CD8-positive, alpha-beta memory T cell (primary cell): ENCODE measurements at regions of chr12 and their contacts with region 1.

Region 1: GRCh38 chr12:122123051-122123760 is 44.6 kb downstream of the MLXIP start:
- DNase-seq: peak; percentile 56 to 77 (median 62)
- H3K4me3 ChIP-seq: no peak overlapping the region
- H3K4me3 Mint-ChIP-seq: peak overlapping the region in 4 of 7 donors; percentile 11 to 67 (median 34)
- H3K27ac ChIP-seq: no peak overlapping the region
- H3K27ac Mint-ChIP-seq: peak overlapping the region in 5 of 8 donors; percentile 4 to 91 (median 36)
- H3K4me1 ChIP-seq: peaks cover 11% of the 10 kb centered on the region
- H3K4me1 Mint-ChIP-seq: peaks cover 22 to 44% (median 23%) of the 10 kb centered on the region in 3 donors
- H3K27me3 ChIP-seq: no peaks in the 10 kb centered on the region
- H3K27me3 Mint-ChIP-seq: no peaks in the 10 kb centered on the region

Region 2: DNA sequence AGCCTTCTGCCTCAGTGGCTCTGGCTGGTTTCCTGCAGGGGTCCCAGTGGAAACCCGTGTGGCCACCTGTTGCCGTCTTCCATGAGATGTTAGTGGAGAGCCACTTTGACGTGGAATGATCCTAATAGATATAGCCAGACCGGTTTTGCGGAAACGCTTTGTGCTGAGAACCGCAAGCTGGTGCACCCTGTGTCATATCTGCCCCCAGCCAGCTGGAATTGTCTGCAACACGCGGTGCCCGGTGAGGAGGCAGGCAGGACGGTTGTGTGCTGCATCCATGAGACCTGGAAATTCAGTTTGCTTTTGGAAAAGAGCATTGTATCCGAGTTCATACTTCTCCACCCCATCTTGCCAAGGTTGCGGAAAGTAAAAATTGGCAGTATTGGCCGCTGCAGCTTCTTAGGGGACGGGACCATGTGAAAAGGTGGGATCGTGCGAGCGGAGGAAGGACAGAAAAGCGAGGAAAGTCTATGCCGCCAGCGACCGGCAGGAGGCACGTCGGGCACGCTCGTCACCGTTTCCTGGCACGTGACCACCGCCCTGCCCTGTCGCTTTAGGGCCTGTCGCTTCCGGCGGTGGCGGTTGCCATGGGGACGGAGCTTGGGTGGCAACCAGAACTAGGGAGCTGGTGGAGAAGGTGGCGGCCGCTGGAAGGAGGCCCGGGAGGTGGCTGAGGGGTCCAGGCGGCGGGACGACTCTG is 205.1 kb before region 1 on chr12 and contains the start of gene CFAP251:
- CTCF ChIA-PET with region 1: interaction called, 10 read pairs
- POLR2A ChIA-PET with region 1: no interaction called
- DNase-seq: peak; percentile 94 to 99 (median 98)
- H3K4me3 ChIP-seq: peak within 1 kb of the TSS; percentile 54
- H3K4me3 Mint-ChIP-seq: peak within 1 kb of the TSS; percentile 72 to 88 (median 85)
- H3K27ac ChIP-seq: peak within 1 kb of the TSS; percentile 64
- H3K27ac Mint-ChIP-seq: peak within 1 kb of the TSS; percentile 91 to 99 (median 96)
- H3K4me1 ChIP-seq: peaks cover 9% of the 10 kb centered on the region
- H3K4me1 Mint-ChIP-seq: peaks cover 5 to 14% (median 11%) of the 10 kb centered on the region in 3 donors
- H3K27me3 ChIP-seq: no peaks in the 10 kb centered on the region
- H3K27me3 Mint-ChIP-seq: no peaks in the 10 kb centered on the region
- total RNA-seq, gene CFAP251: 0.31 to 0.72 TPM

Region 3: GRCh38 chr12:122067966-122068365 is 55.2 kb before region 1 on chr12:
- CTCF ChIA-PET with region 1: interaction called, 11 read pairs
- POLR2A ChIA-PET with region 1: no interaction called
- DNase-seq: peak in 3 of 5 donors; percentile 9 to 59 (median 42)
- H3K4me3 ChIP-seq: peak overlapping the region; percentile 44
- H3K4me3 Mint-ChIP-seq: peak overlapping the region; percentile 8 to 77 (median 63)
- H3K27ac ChIP-seq: no peak overlapping the region
- H3K27ac Mint-ChIP-seq: peak overlapping the region; percentile 31 to 98 (median 80)
- H3K4me1 ChIP-seq: peaks cover 13% of the 10 kb centered on the region
- H3K4me1 Mint-ChIP-seq: peaks cover 10 to 12% (median 12%) of the 10 kb centered on the region in 3 donors
- H3K27me3 ChIP-seq: no peaks in the 10 kb centered on the region
- H3K27me3 Mint-ChIP-seq: no peaks in the 10 kb centered on the region

Region 4: DNA sequence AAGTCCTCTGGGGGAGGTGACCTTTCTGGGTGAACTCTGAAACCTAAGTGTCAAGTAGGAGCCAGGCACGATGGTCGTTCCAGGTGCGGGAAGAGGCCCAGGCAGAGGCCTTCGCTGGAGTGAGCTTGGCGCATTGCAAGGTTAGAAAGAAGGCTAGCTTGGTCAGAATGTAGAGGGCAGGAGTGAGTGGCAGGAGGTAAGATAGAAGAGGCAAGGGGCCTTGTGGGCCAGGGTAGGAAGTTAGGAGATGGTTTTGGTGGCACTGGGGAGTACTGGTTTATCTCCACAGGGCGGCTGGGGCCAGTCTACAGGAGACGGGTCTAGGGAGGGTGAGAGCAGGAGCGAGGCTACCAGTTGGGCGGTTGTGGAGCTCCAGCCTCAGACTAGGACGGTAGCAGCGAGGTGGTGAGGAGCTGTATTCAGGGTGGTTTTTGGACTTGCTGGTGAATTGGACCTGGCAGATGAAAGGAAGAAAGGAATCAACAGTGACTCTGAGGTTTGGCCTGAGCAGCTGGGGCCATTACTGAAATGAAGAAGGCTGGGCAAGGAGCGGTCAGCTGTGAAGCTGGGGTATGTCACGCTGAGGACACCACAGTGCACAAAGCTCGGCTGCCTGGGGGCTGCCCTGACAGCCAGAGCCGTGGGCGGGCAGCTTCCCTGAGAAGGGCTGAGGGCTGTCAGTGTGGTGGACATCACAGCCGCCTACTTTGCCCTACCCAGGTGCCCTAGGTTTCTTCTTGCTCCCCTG is 35.6 kb before region 1 on chr12:
- CTCF ChIA-PET with region 1: interaction called, 11 read pairs
- POLR2A ChIA-PET with region 1: no interaction called
- DNase-seq: no peak
- H3K4me3 ChIP-seq: no peak overlapping the region
- H3K4me3 Mint-ChIP-seq: peak overlapping the region in 1 of 7 donors; percentile 27
- H3K27ac ChIP-seq: no peak overlapping the region
- H3K27ac Mint-ChIP-seq: peak overlapping the region; percentile 25 to 92 (median 79)
- H3K4me1 ChIP-seq: peaks cover 90% of the 10 kb centered on the region
- H3K4me1 Mint-ChIP-seq: peaks cover 19 to 69% (median 63%) of the 10 kb centered on the region in 3 donors
- H3K27me3 ChIP-seq: no peaks in the 10 kb centered on the region
- H3K27me3 Mint-ChIP-seq: peaks cover 0 to 2% of the 10 kb centered on the region in 2 donors

Region 5: GRCh38 chr12:122107261-122107660 is 15.9 kb before region 1 on chr12:
- CTCF ChIA-PET with region 1: interaction called, 17 read pairs
- POLR2A ChIA-PET with region 1: no interaction called
- DNase-seq: no peak
- H3K4me3 ChIP-seq: no peak overlapping the region
- H3K4me3 Mint-ChIP-seq: peak overlapping the region in 1 of 7 donors; percentile 32
- H3K27ac ChIP-seq: no peak overlapping the region
- H3K27ac Mint-ChIP-seq: peak overlapping the region in 2 of 8 donors; percentile 11 to 89
- H3K4me1 ChIP-seq: peaks cover 57% of the 10 kb centered on the region
- H3K4me1 Mint-ChIP-seq: peaks cover 54 to 79% (median 73%) of the 10 kb centered on the region in 3 donors
- H3K27me3 ChIP-seq: no peaks in the 10 kb centered on the region
- H3K27me3 Mint-ChIP-seq: peaks cover 0 to 1% of the 10 kb centered on the region in 2 donors

Region 6: GRCh38 chr12:122174155-122174845 is 51.1 kb after region 1 on chr12 and contains the start of gene IL31:
- CTCF ChIA-PET with region 1: no interaction called
- POLR2A ChIA-PET with region 1: no interaction called
- DNase-seq: no peak
- H3K4me3 ChIP-seq: no peak within 1 kb of the TSS
- H3K4me3 Mint-ChIP-seq: no peak within 1 kb of the TSS
- H3K27ac ChIP-seq: no peak within 1 kb of the TSS
- H3K27ac Mint-ChIP-seq: peak within 1 kb of the TSS in 1 of 8 donors; percentile 76
- H3K4me1 ChIP-seq: no peaks in the 10 kb centered on the region
- H3K4me1 Mint-ChIP-seq: no peaks in the 10 kb centered on the region
- H3K27me3 ChIP-seq: no peaks in the 10 kb centered on the region
- H3K27me3 Mint-ChIP-seq: peaks cover 2% of the 10 kb centered on the region in 2 donors
- total RNA-seq, gene IL31: 4.1 to 5.1 TPM

Region 7: GRCh38 chr12:122834104-122834920 is 711.1 kb after region 1 on chr12:
- CTCF ChIA-PET with region 1: no interaction called
- POLR2A ChIA-PET with region 1: no interaction called
- DNase-seq: peak in 1 of 5 donors; percentile 38
- H3K4me3 ChIP-seq: peak overlapping the region; percentile 78
- H3K4me3 Mint-ChIP-seq: peak overlapping the region; percentile 83 to 97 (median 93)
- H3K27ac ChIP-seq: no peak overlapping the region
- H3K27ac Mint-ChIP-seq: peak overlapping the region; percentile 79 to 96 (median 92)
- H3K4me1 ChIP-seq: peaks cover 17% of the 10 kb centered on the region
- H3K4me1 Mint-ChIP-seq: peaks cover 38 to 47% (median 45%) of the 10 kb centered on the region in 3 donors
- H3K27me3 ChIP-seq: no peaks in the 10 kb centered on the region
- H3K27me3 Mint-ChIP-seq: peaks cover 4 to 7% of the 10 kb centered on the region in 2 donors